T-cell (primary cell): ENCODE measurements at regions of chr3 and their contacts with region 1.

Region 1: GRCh38 chr3:187319699-187320302 is 28.3 kb upstream of the MASP1 start:
- DNase-seq: peak in 33 of 35 experiments; percentile 5 to 63 (median 32)
- ATAC-seq: peak in 3 of 4 experiments; percentile 53 to 69 (median 60)
- H3K4me3 ChIP-seq: no peak overlapping the region
- H3K4me3 Mint-ChIP-seq: no peak overlapping the region
- H3K27ac ChIP-seq: no peak overlapping the region
- H3K27ac Mint-ChIP-seq: no peak overlapping the region
- H3K4me1 ChIP-seq: peaks cover 0 to 12% of the 10 kb centered on the region in 2 experiments
- H3K4me1 Mint-ChIP-seq: peaks cover 14 to 15% (median 14%) of the 10 kb centered on the region in 3 donors
- H3K27me3 ChIP-seq: peaks cover 0 to 33% of the 10 kb centered on the region in 2 experiments
- H3K27me3 Mint-ChIP-seq: peaks cover 28 to 39% of the 10 kb centered on the region in 2 donors

Region 2: GRCh38 chr3:187051719-187052366 is 268.0 kb before region 1 on chr3:
- CTCF ChIA-PET with region 1: no interaction called
- POLR2A ChIA-PET with region 1: no interaction called
- DNase-seq: no peak
- ATAC-seq: no peak
- H3K4me3 ChIP-seq: no peak overlapping the region
- H3K4me3 Mint-ChIP-seq: no peak overlapping the region
- H3K27ac ChIP-seq: no peak overlapping the region
- H3K27ac Mint-ChIP-seq: peak overlapping the region in 1 of 2 donors; percentile 83
- H3K4me1 ChIP-seq: peaks cover 0 to 24% of the 10 kb centered on the region in 2 experiments
- H3K4me1 Mint-ChIP-seq: peaks cover 61 to 87% (median 83%) of the 10 kb centered on the region in 3 donors
- H3K27me3 ChIP-seq: no peaks in the 10 kb centered on the region
- H3K27me3 Mint-ChIP-seq: no peaks in the 10 kb centered on the region

Region 3: DNA sequence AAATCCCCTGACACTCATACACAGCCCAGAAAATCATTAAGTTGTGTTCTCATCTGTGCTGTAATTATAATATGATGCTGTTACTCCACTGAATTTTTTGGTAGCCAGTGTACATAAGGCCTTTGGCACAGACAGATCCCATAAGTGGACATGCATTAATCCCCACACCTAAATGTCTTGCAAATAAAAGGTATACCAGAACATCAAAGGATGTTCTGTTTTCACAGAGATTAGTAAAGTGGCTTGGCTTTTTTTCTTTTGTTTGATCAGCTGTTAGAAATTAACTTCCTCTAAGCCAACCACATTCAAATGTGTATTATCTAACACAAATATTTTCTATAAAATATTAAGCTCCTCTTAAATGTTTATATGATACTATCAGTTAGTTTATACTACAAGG is 347.7 kb after region 1 on chr3:
- CTCF ChIA-PET with region 1: interaction called, 6 to 13 read pairs
- POLR2A ChIA-PET with region 1: no interaction called
- DNase-seq: no peak
- ATAC-seq: no peak
- H3K4me3 ChIP-seq: no peak overlapping the region
- H3K4me3 Mint-ChIP-seq: no peak overlapping the region
- H3K27ac ChIP-seq: no peak overlapping the region
- H3K27ac Mint-ChIP-seq: no peak overlapping the region
- H3K4me1 ChIP-seq: no peaks in the 10 kb centered on the region
- H3K4me1 Mint-ChIP-seq: no peaks in the 10 kb centered on the region
- H3K27me3 ChIP-seq: peaks cover 6 to 13% of the 10 kb centered on the region in 2 experiments
- H3K27me3 Mint-ChIP-seq: peaks cover 45 to 57% of the 10 kb centered on the region in 2 donors

Region 4: GRCh38 chr3:187679638-187680396 is 360.0 kb after region 1 on chr3:
- CTCF ChIA-PET with region 1: interaction called, 103 to 198 read pairs
- POLR2A ChIA-PET with region 1: no interaction called
- DNase-seq: peak in 34 of 35 experiments; percentile 6 to 75 (median 48)
- ATAC-seq: peak; percentile 42 to 57 (median 53)
- H3K4me3 ChIP-seq: no peak overlapping the region
- H3K4me3 Mint-ChIP-seq: no peak overlapping the region
- H3K27ac ChIP-seq: no peak overlapping the region
- H3K27ac Mint-ChIP-seq: no peak overlapping the region
- H3K4me1 ChIP-seq: no peaks in the 10 kb centered on the region
- H3K4me1 Mint-ChIP-seq: peaks cover 0 to 2% (median 0%) of the 10 kb centered on the region in 3 donors
- H3K27me3 ChIP-seq: peaks cover 0 to 12% of the 10 kb centered on the region in 2 experiments
- H3K27me3 Mint-ChIP-seq: peaks cover 41 to 44% of the 10 kb centered on the region in 2 donors

Region 5: GRCh38 chr3:187714404-187714979 is 394.7 kb after region 1 on chr3:
- CTCF ChIA-PET with region 1: interaction called, 22 to 42 read pairs
- POLR2A ChIA-PET with region 1: no interaction called
- DNase-seq: peak in 34 of 35 experiments; percentile 28 to 84 (median 59)
- ATAC-seq: peak; percentile 76 to 86 (median 80)
- H3K4me3 ChIP-seq: no peak overlapping the region
- H3K4me3 Mint-ChIP-seq: no peak overlapping the region
- H3K27ac ChIP-seq: no peak overlapping the region
- H3K27ac Mint-ChIP-seq: peak overlapping the region in 1 of 2 donors; percentile 73
- H3K4me1 ChIP-seq: peaks cover 0 to 5% of the 10 kb centered on the region in 2 experiments
- H3K4me1 Mint-ChIP-seq: peaks cover 13 to 16% (median 15%) of the 10 kb centered on the region in 3 donors
- H3K27me3 ChIP-seq: no peaks in the 10 kb centered on the region
- H3K27me3 Mint-ChIP-seq: peaks cover 0 to 3% of the 10 kb centered on the region in 2 donors